ENCODE measurements at regions of chr1 and their contacts with region 1.

Region 1: DNA sequence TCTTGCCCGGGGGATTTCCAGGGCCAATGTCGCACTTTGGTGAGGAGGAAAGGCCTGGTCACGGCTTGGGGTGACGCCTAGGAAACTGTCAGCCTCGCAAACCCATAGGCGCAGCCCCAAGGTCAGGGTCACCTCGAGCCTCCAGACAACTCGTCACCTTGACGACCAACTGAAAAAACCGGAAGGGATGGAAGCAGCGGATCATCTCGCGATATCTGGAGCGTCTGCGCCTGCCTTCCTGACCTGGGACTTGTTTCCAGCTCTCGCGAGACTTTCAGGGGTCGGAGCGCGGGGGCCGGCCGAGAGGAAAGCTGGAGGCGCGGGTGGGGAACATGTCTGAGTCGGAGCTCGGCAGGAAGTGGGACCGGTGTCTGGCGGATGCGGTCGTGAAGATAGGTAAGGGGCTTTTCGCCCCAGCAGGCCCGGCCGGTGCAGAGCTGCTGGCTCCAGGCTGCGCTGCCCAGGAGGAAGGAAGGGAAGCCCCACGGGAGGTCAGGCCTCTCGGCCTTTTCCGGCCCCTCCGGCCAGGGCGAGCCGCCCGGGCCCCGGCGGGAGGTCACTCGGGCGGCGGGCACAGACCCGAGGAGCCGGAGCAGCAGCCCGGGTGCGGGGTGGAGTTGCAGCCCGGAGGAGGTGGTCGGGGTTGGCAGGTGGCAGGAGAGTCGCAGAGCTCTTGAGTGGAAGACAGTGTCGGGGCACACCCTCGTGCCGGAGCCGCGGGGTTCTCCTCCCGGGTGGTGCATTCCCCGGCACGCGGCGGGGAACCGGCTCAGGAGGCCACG is 47.2 kb upstream of the NBL1 start:
- DNase-seq: peak; percentile 89 to 99
- H3K4me3 ChIP-seq: peak overlapping the region; percentile 69 to 73
- H3K27ac ChIP-seq: peak overlapping the region; percentile 80 to 91
- H3K4me1 ChIP-seq: peaks cover 3 to 31% of the 10 kb centered on the region in 2 donors
- H3K27me3 ChIP-seq: no peaks in the 10 kb centered on the region
- CTCF ChIP-seq: no peak

Region 2: DNA sequence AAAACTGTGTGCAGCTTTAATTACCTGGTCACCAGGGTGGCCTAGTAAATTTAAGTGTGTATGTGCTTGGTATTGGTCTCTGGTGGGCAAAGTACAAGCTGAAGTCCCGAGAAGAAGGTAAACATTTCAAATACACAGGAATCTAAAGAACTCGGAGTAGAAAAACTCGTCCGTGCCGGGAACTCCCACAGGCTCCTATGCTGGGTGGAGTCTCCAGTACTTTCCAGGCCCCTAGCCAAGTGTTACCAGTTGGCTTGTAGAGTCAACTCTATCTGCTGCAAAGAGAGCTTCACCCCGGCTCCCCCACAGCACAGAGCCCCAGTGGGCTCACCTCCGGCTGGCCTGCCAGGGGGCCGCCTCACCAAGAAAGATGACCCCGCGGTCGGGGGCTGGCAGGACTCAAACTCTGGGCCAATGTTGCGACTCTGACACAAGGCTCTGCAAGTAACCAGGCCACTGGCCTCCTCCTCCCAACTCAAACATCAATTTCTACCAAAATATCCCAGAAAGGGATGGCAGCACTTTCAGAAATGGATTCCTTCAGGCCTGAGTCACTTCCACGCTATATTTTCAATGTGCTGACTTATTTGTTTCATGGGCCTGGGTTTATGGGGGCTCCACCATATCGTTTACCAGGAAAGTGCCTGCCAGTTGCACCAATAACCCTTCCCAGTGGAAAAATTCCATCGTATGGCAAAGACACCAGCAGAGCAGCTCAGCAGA is 210.9 kb before region 1 on chr1:
- intact Hi-C with region 1: loop called (anchors 5 kb)
- DNase-seq: peak in 1 of 2 donors; percentile 86
- H3K4me3 ChIP-seq: no peak overlapping the region
- H3K27ac ChIP-seq: peak overlapping the region; percentile 76 to 77
- H3K4me1 ChIP-seq: peaks cover 24 to 63% of the 10 kb centered on the region in 2 donors
- H3K27me3 ChIP-seq: no peaks in the 10 kb centered on the region
- CTCF ChIP-seq: no peak

Region 3: GRCh38 chr1:19563324-19564097 is 33.4 kb before region 1 on chr1:
- intact Hi-C with region 1: loop called (anchors 2 kb)
- DNase-seq: peak in 1 of 2 donors; percentile 76
- H3K4me3 ChIP-seq: peak overlapping the region; percentile 39 to 50
- H3K27ac ChIP-seq: peak overlapping the region; percentile 82
- H3K4me1 ChIP-seq: peaks cover 2 to 15% of the 10 kb centered on the region in 2 donors
- H3K27me3 ChIP-seq: no peaks in the 10 kb centered on the region
- CTCF ChIP-seq: no peak

Region 4: GRCh38 chr1:19616489-19616888 is 19.6 kb after region 1 on chr1:
- intact Hi-C with region 1: no loop called
- DNase-seq: no peak
- H3K4me3 ChIP-seq: no peak overlapping the region
- H3K27ac ChIP-seq: no peak overlapping the region
- H3K4me1 ChIP-seq: peaks cover 0 to 20% of the 10 kb centered on the region in 2 donors
- H3K27me3 ChIP-seq: no peaks in the 10 kb centered on the region
- CTCF ChIP-seq: no peak

Region 5: GRCh38 chr1:19643602-19644394 is 46.9 kb after region 1 on chr1 and contains the start of gene NBL1:
- intact Hi-C with region 1: loop called (anchors 2 kb)
- DNase-seq: peak in 1 of 2 donors; percentile 81
- H3K4me3 ChIP-seq: peak within 1 kb of the TSS; percentile 67 to 75
- H3K27ac ChIP-seq: peak within 1 kb of the TSS; percentile 90 to 91
- H3K4me1 ChIP-seq: peaks cover 18 to 36% of the 10 kb centered on the region in 2 donors
- H3K27me3 ChIP-seq: no peaks in the 10 kb centered on the region
- CTCF ChIP-seq: no peak
- total RNA-seq, gene NBL1: 157 TPM

Region 6: DNA sequence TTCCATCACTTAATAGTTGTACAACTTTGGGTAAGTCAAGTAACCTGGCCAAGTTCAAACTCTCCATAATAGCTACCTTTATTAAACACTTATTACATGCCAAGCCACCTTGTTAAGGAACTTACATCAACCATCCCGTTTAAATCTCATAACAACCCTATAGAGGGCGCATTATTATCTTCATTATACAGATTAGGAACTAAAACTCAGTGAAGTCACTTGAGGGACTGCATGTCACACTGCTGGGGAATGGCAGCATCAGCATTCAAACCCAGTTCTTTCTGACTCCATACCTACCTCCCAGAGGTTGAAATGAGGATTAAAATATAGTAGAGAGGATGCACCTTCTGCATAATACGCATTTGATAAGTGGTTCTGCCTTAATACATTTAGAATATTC is 636.5 kb after region 1 on chr1:
- intact Hi-C with region 1: no loop called
- DNase-seq: no peak
- H3K4me3 ChIP-seq: no peak overlapping the region
- H3K27ac ChIP-seq: no peak overlapping the region
- H3K4me1 ChIP-seq: no peaks in the 10 kb centered on the region
- H3K27me3 ChIP-seq: peaks cover 5% of the 10 kb centered on the region
- CTCF ChIP-seq: no peak